Spleen (tissue), 13 donors: ENCODE measurements at regions of chr2 and their contacts with region 1.

Region 1: DNA sequence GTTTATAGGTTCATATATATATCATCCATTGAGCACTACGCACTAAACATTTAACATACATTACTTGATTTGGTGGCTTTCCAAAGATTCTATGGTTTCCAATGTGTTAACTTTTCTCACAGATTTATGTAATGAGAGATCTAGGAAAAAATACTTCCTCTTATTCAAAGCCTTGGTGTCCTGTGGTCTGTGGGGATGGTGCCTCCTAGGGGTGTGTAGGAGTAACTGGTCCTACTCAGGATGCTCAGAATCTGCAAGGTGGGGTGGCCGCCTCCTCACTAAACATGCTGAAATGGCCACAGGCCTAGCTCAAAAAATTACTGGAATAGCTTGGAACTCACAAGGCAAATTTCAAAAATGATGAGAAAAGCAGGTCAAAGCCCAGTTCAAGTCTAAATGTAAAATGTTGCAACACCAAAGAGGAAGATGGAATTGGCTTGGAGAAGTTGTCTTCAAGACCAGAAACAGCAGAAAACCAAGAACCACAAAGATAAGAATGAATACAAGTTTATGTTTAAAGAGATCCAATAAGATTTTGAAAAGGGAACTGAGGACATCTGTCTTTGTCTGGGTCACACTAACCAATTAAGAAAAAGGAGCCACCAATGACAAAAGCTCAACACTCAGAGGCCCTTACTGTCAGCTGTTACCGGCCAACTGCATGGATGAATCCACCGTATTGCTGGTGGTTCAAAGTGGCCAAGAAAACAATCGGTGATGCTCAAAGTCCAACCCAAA is 11.5 kb downstream of the GPR55 start:
- DNase-seq: peak; percentile 78
- H3K4me3 ChIP-seq: no peak overlapping the region
- H3K27ac ChIP-seq: peak overlapping the region in 2 of 8 donors; percentile 22 to 42
- H3K4me1 ChIP-seq: peaks cover 0 to 12% (median 3%) of the 10 kb centered on the region in 6 donors
- H3K27me3 ChIP-seq: peaks cover 0 to 14% (median 0%) of the 10 kb centered on the region in 7 donors
- CTCF ChIP-seq: peak; percentile 36 to 73 (median 58)
- POLR2A ChIP-seq: no peak

Region 2: DNA sequence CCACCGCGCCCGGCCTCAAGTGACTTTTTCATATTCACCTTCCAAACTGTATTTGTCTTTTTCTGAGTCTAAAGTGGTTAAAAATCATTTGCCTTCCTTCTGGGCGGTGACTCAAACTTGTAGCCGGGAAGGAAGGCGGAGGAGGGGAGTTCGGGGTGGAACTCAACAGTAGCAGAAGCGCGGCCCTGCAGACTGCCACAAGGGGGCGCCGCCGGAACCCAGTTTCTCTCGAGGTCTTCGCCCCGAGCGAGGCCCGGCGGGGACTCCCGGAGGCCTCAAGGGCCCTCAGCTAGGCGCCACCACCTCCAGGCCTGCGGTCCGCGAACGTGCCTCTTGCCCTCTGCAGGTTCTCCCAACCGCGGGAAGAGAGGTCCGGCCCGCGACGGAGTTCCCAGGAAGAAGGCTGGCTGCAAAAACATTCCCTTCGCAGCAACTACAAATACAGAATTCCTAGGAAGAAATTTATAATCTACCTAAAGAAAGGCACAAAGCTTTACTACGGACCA is 65.6 kb before region 1 on chr2:
- intact Hi-C with region 1: loop called (anchors 5 kb)
- DNase-seq: peak; percentile 96
- H3K4me3 ChIP-seq: peak overlapping the region in 1 of 8 donors; percentile 35
- H3K27ac ChIP-seq: no peak overlapping the region
- H3K4me1 ChIP-seq: peaks cover 0 to 12% (median 8%) of the 10 kb centered on the region in 6 donors
- H3K27me3 ChIP-seq: peaks cover 0 to 40% (median 6%) of the 10 kb centered on the region in 7 donors
- CTCF ChIP-seq: peak; percentile 64 to 95 (median 90)
- POLR2A ChIP-seq: no peak